AG04449 (cell line): ENCODE measurements at regions of chr9 and their contacts with region 1.

Region 1: GRCh38 chr9:130107234-130107861 is 53.6 kb downstream of the GPR107 start:
- DNase-seq: no peak
- H3K4me3 ChIP-seq: no peak overlapping the region
- CTCF ChIP-seq: peak; percentile 71

Region 2: DNA sequence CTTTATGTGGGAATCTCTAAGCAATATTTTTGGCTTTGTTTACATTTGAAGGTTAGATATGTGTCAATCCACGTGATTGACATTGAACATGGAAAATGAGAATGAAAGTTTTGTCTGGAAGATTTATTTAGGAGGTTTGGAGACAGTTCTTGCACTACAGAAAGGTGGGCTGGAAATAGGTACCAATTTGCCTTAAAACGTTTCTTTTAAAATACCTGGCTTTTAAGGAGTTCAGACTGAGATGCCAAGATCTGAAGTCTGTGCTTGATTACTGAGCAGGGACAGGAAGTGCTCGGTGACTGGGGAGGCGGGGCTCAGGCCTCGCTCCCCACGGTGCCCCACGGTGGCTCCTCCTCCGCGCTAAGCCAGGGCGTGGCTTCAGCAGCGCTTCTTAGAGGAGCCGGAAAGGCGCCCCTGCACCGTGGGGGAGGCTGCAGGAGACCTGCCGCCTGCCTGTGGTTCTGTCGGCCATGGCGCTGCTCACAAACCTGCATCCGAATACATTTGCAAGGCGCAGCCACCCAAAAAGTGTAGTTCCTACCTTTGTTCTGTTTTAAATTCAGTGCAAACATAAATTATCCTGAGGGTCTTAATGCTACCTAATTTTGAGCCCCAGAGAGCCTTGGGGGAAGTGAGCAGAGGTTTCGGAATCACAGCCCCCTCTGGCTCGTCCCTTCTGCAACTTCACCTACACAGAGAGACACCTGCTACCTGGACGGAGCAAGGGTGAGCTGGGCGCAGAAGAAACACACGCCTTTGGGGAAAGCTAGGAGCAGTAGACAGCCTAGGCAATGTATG is 222.9 kb before region 1 on chr9:
- CTCF ChIA-PET with region 1: interaction called, 14 read pairs
- POLR2A ChIA-PET with region 1: no interaction called
- DNase-seq: no peak
- H3K4me3 ChIP-seq: peak overlapping the region; percentile 36
- CTCF ChIP-seq: no peak

Region 3: GRCh38 chr9:130023144-130023787 is 84.1 kb before region 1 on chr9:
- CTCF ChIA-PET with region 1: no interaction called
- POLR2A ChIA-PET with region 1: no interaction called
- DNase-seq: no peak
- H3K4me3 ChIP-seq: no peak overlapping the region
- CTCF ChIP-seq: no peak

Region 4: GRCh38 chr9:130118841-130119518 is 11.6 kb after region 1 on chr9:
- CTCF ChIA-PET with region 1: interaction called, 59 read pairs
- POLR2A ChIA-PET with region 1: no interaction called
- DNase-seq: no peak
- H3K4me3 ChIP-seq: no peak overlapping the region
- CTCF ChIP-seq: no peak

Region 5: DNA sequence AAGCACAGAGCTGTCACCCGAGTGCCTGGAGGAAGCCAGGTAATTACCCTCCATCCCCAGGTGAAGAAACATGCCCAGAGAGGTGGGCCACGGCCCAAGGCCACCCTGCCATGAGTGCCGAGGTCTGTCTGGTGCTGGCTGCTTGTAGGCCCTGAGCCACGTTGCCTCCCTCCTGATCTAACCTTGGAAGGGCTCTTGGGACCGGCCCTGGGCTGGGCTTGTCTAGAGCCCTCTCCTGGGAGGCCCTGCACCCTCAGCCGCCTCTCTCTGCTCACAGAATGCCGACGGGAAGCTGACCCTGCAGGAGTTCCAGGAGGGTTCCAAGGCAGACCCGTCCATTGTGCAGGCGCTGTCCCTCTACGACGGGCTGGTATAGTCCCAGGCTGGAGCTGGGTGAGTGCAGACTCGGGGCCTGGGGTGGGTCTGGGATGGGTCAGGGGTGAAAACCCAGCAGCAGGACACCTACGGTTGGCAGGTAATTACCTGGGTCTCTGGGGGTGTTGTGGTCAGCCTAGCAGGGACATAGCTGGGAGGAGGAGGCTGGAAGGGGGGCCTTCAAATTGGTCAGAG is 118.8 kb after region 1 on chr9:
- CTCF ChIA-PET with region 1: interaction called, 24 read pairs
- POLR2A ChIA-PET with region 1: no interaction called
- DNase-seq: no peak
- H3K4me3 ChIP-seq: no peak overlapping the region
- CTCF ChIP-seq: no peak

Region 6: GRCh38 chr9:130343445-130343918 is 236.1 kb after region 1 on chr9:
- CTCF ChIA-PET with region 1: interaction called, 62 read pairs
- POLR2A ChIA-PET with region 1: no interaction called
- DNase-seq: no peak
- H3K4me3 ChIP-seq: no peak overlapping the region
- CTCF ChIP-seq: peak; percentile 86